ENCODE measurements at regions of chr22 and their contacts with region 1.

Region 1: DNA sequence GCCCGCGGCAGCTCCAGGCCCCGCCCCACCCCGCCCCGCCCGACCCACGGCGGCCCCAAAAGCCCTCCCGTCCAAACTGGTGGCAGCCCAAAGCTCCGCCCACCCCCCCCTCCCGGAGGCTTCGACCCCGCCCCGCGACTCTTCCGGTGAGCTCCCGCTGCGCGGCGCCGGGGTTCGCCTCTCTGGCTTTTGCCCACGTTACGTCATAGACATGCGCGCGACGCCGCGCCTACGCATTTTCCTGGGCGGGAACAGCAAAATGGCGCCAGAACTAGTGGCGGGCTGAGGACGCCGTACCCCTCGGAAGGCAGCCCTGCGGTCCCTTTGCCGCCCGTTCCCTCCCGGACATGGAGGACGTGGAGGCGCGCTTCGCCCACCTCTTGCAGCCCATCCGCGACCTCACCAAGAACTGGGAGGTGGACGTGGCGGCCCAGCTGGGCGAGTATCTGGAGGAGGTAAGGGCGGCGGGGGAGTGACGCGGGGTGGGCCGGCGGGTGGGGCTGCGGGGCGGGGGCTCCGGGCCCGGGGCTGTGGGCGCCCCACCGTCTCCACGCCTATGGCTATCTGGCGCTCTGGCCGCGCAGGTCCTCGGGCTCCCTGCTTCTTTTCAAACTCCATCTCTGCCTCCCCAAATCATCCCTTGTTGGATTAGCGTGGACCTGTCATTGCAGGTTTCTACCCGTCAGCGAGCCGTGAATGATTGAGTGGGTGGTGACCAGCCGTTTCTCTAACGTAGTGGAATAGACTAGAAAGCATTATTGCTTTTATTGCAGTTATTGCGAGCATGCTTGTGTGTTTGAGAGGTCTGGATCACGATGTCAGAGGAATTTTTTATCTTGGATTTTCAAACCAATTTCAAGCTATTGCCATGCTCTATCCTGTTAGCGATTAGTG is at the start of gene NCAPH2:
- DNase-seq: peak; percentile 97 to 99
- ATAC-seq: peak; percentile 93
- H3K4me3 ChIP-seq: peak within 1 kb of the TSS; percentile 57 to 87
- H3K27ac ChIP-seq: peak within 1 kb of the TSS; percentile 8 to 86
- H3K4me1 ChIP-seq: no peaks in the 10 kb centered on the region
- H3K27me3 ChIP-seq: no peaks in the 10 kb centered on the region
- total RNA-seq, gene NCAPH2: 31.6 to 35.5 TPM

Region 2: DNA sequence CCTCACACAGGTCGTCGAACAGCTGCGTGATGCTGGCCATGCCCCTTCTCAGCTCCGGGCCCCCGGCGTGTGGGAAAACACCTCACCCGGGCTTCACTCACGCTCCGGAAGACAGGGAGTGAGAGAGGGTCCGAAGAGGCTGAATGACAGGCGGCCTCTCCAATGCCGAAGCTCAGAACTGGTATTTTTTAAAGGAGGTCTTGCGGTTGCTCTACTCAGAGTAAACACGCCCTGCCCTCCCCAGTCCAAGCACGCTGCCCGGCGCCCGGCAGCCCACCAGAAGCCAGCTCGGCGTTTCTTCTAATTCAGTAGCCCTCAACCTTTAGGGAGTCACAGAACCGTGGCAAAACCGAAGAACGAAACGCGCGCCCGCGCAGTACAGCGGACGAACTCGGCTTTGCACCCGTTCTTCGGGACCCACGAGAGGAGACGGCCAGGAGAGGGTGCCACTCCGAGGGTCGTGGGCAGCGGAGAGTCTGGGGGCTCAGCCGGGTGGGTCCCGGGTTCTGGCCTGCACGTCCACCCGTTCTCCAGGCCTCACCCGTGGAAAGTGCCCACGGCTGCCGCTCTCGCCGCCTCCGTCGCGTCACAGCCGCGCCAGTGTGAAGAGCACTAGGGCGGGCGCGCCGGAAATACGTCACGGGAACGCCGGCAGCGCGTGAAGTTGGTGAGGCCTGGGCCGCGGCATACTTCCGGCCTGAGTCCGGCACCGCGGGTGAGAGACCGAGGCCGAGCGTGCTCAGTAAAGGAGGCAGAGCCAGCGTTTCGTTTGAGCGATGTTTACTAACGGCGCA is 263.6 kb before region 1 on chr22 and contains the start of gene TUBGCP6:
- intact Hi-C with region 1: loop called in 1 of 2 experiments (anchors 10 kb)
- DNase-seq: peak; percentile 97 to 99
- ATAC-seq: peak; percentile 95
- H3K4me3 ChIP-seq: peak within 1 kb of the TSS; percentile 55 to 77
- H3K27ac ChIP-seq: peak within 1 kb of the TSS in 1 of 2 donors; percentile 74
- H3K4me1 ChIP-seq: no peaks in the 10 kb centered on the region
- H3K27me3 ChIP-seq: no peaks in the 10 kb centered on the region
- total RNA-seq, gene TUBGCP6: 29.0 to 49.5 TPM

Region 3: DNA sequence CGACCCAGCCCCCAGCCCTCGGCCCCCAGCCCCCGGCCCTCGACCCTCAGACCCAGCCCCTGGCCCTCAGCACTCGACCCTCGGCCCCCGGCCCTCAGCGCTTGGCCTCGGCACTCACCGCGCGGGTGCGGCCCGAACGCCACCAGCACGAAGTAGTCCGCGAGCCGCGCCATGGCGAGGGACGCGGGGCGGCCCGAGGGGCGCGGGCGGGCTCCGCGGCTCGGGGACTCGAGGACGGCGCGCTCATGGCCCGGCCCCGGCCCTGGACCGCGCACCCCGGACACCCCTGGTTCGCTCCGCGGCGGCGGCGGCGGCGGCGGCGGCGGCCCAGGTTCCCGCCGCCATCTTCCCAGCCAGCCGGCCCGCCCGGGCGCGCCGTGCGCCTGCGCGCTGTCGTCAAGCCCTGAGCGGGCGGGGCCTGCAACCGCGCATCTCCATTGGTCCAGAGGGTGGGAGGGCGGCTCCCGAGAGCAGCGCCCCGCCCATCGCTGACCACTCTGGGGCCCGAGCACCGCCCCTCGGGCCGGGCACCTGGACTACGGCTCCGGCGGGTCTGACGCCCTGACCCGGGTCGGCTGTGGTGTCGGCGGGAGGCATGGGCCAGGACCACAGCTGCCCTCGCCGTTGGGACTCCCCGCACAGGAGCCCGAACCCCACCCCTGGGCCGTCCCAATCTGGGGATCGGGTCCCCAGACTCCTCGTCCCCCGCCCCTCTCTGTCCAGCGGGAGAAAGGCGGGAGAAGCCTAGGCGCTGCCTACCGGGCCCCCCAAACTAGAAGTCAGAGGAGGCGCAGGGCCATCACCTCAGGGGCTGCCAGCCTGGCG is 33.4 kb before region 1 on chr22 and contains the start of gene SBF1:
- intact Hi-C with region 1: loop called in 1 of 2 experiments (anchors 2 kb)
- DNase-seq: peak; percentile 94 to 97
- ATAC-seq: peak; percentile 97
- H3K4me3 ChIP-seq: peak within 1 kb of the TSS; percentile 91 to 93
- H3K27ac ChIP-seq: no peak within 1 kb of the TSS
- H3K4me1 ChIP-seq: no peaks in the 10 kb centered on the region
- H3K27me3 ChIP-seq: no peaks in the 10 kb centered on the region
- total RNA-seq, gene SBF1: 65.3 to 77.9 TPM

Region 4: GRCh38 chr22:50525390-50526068 is 17.3 kb after region 1 on chr22 and contains the start of gene SCO2:
- intact Hi-C with region 1: loop called (anchors 1 kb)
- DNase-seq: peak; percentile 98 to 99
- ATAC-seq: peak; percentile 86
- H3K4me3 ChIP-seq: peak within 1 kb of the TSS; percentile 51 to 53
- H3K27ac ChIP-seq: peak within 1 kb of the TSS in 1 of 2 donors; percentile 54
- H3K4me1 ChIP-seq: no peaks in the 10 kb centered on the region
- H3K27me3 ChIP-seq: no peaks in the 10 kb centered on the region
- total RNA-seq, gene SCO2: 4.7 to 5.1 TPM

Region 5: GRCh38 chr22:50562523-50563412 is 54.5 kb after region 1 on chr22 and contains the start of gene SYCE3:
- intact Hi-C with region 1: loop called in 1 of 2 experiments (anchors 5 kb)
- DNase-seq: peak; percentile 97 to 99
- ATAC-seq: peak; percentile 98
- H3K4me3 ChIP-seq: peak within 1 kb of the TSS in 1 of 2 donors; percentile 58
- H3K27ac ChIP-seq: no peak within 1 kb of the TSS
- H3K4me1 ChIP-seq: no peaks in the 10 kb centered on the region
- H3K27me3 ChIP-seq: no peaks in the 10 kb centered on the region
- total RNA-seq, gene SYCE3: not detected

Region 6: DNA sequence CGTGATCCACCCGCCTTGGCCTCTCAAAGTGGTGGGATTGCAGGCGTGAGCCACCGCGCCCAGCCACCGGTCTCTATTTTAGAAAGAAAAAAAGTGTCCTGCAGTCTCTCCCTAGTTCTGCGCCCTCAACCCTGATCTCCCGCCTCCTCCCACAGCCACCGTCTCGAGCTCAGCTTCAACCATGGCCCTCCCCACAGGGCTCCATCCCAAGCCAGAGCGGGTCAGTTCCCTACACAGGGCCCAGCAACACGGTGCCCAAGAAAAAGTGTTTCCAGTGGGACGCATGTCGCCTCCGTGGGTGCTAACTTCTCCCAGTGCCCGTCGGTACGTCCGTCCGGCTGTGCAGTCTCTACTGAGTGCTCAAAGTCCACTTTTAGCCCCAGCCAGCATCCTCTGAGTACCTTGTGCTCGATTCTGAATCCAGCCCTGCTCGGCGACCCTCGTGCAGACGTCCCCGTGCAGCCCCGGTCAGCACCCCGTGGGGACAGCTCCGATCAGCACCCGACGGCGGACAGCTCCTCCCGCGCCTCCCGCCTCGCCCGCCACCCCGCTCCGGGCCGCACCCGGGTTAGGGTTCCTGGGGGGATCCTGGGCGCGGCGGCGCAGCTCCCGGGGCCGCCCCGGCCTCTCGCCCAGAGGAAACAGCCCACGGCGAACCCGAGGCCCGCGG is 91.7 kb after region 1 on chr22:
- intact Hi-C with region 1: no loop called
- DNase-seq: peak; percentile 65 to 89
- ATAC-seq: peak; percentile 71
- H3K4me3 ChIP-seq: peak overlapping the region; percentile 35 to 40
- H3K27ac ChIP-seq: no peak overlapping the region
- H3K4me1 ChIP-seq: no peaks in the 10 kb centered on the region
- H3K27me3 ChIP-seq: no peaks in the 10 kb centered on the region

Measured in aorta (tissue), 5 donors.